Common myeloid progenitor, CD34-positive (primary cell): ENCODE measurements at regions of chr4 and their contacts with region 1.

Region 1: GRCh38 chr4:14110407-14110806 is 482.9 kb upstream of the BOD1L1 start:
- DNase-seq: no peak
- H3K4me3 ChIP-seq: no peak overlapping the region
- H3K27ac ChIP-seq: no peak overlapping the region
- H3K4me1 ChIP-seq: peaks cover 0 to 11% (median 7%) of the 10 kb centered on the region in 4 experiments
- H3K27me3 ChIP-seq: no peaks in the 10 kb centered on the region

Region 2: GRCh38 chr4:12926189-12927066 is 1184.0 kb before region 1 on chr4:
- CTCF ChIA-PET with region 1: no interaction called
- POLR2A ChIA-PET with region 1: no interaction called
- DNase-seq: no peak
- H3K4me3 ChIP-seq: no peak overlapping the region
- H3K27ac ChIP-seq: no peak overlapping the region
- H3K4me1 ChIP-seq: no peaks in the 10 kb centered on the region
- H3K27me3 ChIP-seq: no peaks in the 10 kb centered on the region

Region 3: GRCh38 chr4:14091966-14092365 is 18.4 kb before region 1 on chr4:
- CTCF ChIA-PET with region 1: no interaction called
- POLR2A ChIA-PET with region 1: interaction called, 15 read pairs
- DNase-seq: no peak
- H3K4me3 ChIP-seq: no peak overlapping the region
- H3K27ac ChIP-seq: no peak overlapping the region
- H3K4me1 ChIP-seq: no peaks in the 10 kb centered on the region
- H3K27me3 ChIP-seq: no peaks in the 10 kb centered on the region